ENCODE measurements at regions of chr3 and their contacts with region 1.

Region 1: GRCh38 chr3:50674349-50675178 is at the start of gene DOCK3:
- DNase-seq: no peak
- ATAC-seq: peak; percentile 86
- H3K4me3 ChIP-seq: peak within 1 kb of the TSS in 1 of 3 experiments; percentile 23; a peak in 1 of 6 replicates
- H3K27ac ChIP-seq: no peak within 1 kb of the TSS
- H3K4me1 ChIP-seq: no peaks in the 10 kb centered on the region
- H3K27me3 ChIP-seq: peaks cover 4 to 65% of the 10 kb centered on the region in 2 experiments
- CTCF ChIP-seq: no peak
- EP300 ChIP-seq: no peak
- POLR2A ChIP-seq: no peak
- RAD21 ChIP-seq: no peak
- total RNA-seq, gene DOCK3: not detected in 2 replicates

Region 2: DNA sequence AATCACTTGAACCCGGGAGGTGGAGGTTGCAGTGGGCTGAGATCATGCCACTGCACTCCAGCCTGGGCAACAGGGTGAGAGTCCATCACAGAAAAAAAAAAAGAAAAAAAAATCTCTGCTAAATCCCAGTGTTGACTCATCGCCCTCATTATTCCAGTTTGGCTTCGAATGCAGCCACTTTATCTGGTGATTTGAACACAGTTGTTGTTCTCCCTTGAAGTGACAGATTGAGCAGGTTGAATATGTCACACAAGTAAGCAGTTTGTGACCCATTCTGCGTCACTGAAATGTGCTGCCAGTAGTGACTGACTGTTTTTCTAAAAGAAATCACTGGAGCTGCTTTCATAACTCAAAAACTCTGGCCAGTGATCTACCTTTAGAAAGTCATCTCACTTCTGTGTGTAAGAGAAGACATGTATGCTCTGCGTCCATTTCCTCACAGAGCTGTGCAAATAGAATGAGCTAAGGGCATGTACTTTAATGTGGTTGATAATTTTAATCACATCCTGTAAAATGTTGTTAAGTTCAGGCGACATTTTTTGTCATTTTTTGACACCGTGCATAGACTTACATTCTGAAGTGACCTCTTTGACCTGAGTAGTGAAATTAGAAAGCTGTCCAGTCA is 12.7 kb after region 1 on chr3:
- CTCF ChIA-PET with region 1: no interaction called
- POLR2A ChIA-PET with region 1: no interaction called
- in situ Hi-C with region 1: no loop called
- intact Hi-C with region 1: no loop called
- DNase-seq: no peak
- ATAC-seq: no peak
- H3K4me3 ChIP-seq: no peak overlapping the region
- H3K27ac ChIP-seq: no peak overlapping the region
- H3K4me1 ChIP-seq: no peaks in the 10 kb centered on the region
- H3K27me3 ChIP-seq: peaks cover 0 to 4% of the 10 kb centered on the region in 2 experiments; a peak in 1 of 5 replicates
- CTCF ChIP-seq: no peak
- EP300 ChIP-seq: no peak
- POLR2A ChIP-seq: no peak
- RAD21 ChIP-seq: no peak

Region 3: DNA sequence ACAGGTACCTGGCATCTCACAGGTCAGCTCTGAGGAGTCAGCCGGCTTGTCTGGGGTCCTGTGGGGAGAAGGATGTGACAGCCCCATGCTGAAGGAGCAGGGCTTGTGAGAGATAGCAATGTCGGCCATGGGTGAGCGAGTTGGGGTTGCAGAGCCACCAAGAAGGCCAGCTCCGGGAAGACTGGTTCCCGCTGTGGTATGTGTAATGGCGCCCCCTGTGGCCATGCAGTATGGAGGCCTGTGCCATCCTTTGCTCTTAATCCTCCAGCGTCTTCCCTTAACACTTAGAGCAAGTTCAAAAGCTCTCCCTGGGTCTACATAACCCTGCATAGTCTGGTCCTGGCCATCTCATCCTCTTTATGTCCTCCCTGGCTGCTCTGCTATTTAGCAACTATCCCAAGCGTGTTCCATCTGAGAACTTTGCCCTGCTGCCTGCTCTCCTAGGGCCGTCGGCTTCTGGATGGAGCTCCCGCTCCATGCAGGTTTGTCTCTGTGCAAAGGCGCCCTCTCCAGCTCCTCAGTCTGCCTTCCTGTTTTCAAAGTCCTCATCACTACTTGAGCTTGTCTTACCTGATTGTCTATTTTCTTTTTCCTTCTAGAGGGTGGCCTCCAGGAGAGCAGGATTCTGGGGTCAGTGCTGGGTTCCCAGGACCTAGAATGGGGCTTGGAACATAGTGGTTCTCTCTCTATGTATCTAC is 1145.3 kb after region 1 on chr3:
- CTCF ChIA-PET with region 1: no interaction called
- POLR2A ChIA-PET with region 1: no interaction called
- in situ Hi-C with region 1: no loop called
- intact Hi-C with region 1: loop called (anchors 5 kb)
- DNase-seq: peak; percentile 6
- ATAC-seq: peak; percentile 80
- H3K4me3 ChIP-seq: no peak overlapping the region
- H3K27ac ChIP-seq: no peak overlapping the region
- H3K4me1 ChIP-seq: no peaks in the 10 kb centered on the region
- H3K27me3 ChIP-seq: peaks cover 0 to 24% of the 10 kb centered on the region in 2 experiments; a peak in 3 of 5 replicates
- CTCF ChIP-seq: peak; percentile 44
- EP300 ChIP-seq: no peak
- POLR2A ChIP-seq: no peak
- RAD21 ChIP-seq: no peak

Measured in HepG2 (cell line).